ENCODE measurements at regions of chr17 and their contacts with region 1.

Region 1: DNA sequence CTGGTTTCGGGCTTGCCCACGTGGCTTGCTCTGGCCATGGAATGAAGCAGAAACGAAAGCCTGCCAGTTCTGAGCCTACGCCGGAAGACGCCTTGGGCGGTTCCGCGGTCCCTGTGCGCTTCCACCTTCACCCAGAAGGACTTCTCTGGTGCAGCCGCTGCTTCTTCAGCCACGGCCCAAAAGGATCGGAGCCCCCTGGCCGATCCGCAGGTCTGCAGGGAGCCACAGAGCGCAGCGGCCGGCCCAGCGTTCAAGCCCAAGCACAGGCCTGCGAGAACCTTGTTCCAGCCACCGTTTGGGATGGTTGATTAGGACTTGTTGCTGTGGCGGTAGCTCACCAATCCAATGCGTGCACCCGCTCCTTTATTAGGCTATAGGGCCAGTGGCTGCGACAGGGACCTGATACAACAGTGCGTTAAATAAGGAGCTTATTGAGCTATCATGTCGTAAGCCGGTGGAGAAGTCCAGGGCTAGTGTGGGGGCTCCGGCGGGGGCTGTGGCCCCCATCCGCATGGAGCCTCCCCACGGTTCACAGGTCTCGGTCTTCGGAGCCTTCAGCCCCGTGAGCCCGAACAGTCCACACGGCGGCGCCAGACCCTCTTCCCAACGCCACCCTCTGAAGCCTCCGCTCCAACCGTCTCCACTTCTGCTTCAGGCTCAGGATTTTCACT is 10.1 kb upstream of the MPP2 start:
- DNase-seq: peak in 8 of 9 experiments; percentile 24 to 74 (median 52)
- ATAC-seq: peak; percentile 79
- H3K4me3 ChIP-seq: peak overlapping the region; percentile 34 to 47
- H3K4me3 Mint-ChIP-seq: peak overlapping the region; percentile 82
- H3K27ac ChIP-seq: no peak overlapping the region
- H3K27ac Mint-ChIP-seq: no peak overlapping the region
- H3K4me1 ChIP-seq: peaks cover 10% of the 10 kb centered on the region
- H3K4me1 Mint-ChIP-seq: peaks cover 10% of the 10 kb centered on the region
- H3K27me3 ChIP-seq: no peaks in the 10 kb centered on the region
- H3K27me3 Mint-ChIP-seq: no peaks in the 10 kb centered on the region
- CTCF ChIP-seq: peak; percentile 33

Region 2: GRCh38 chr17:43946069-43946696 is 28.7 kb after region 1 on chr17:
- CTCF ChIA-PET with region 1: interaction called, 45 read pairs
- POLR2A ChIA-PET with region 1: no interaction called
- intact Hi-C with region 1: loop called in 1 of 2 experiments (anchors 2 kb)
- DNase-seq: no peak
- ATAC-seq: no peak
- H3K4me3 ChIP-seq: no peak overlapping the region
- H3K4me3 Mint-ChIP-seq: no peak overlapping the region
- H3K27ac ChIP-seq: no peak overlapping the region
- H3K27ac Mint-ChIP-seq: no peak overlapping the region
- H3K4me1 ChIP-seq: no peaks in the 10 kb centered on the region
- H3K4me1 Mint-ChIP-seq: no peaks in the 10 kb centered on the region
- H3K27me3 ChIP-seq: peaks cover 0 to under 1% of the 10 kb centered on the region in 2 experiments
- H3K27me3 Mint-ChIP-seq: peaks cover 17% of the 10 kb centered on the region
- CTCF ChIP-seq: no peak

Region 3: DNA sequence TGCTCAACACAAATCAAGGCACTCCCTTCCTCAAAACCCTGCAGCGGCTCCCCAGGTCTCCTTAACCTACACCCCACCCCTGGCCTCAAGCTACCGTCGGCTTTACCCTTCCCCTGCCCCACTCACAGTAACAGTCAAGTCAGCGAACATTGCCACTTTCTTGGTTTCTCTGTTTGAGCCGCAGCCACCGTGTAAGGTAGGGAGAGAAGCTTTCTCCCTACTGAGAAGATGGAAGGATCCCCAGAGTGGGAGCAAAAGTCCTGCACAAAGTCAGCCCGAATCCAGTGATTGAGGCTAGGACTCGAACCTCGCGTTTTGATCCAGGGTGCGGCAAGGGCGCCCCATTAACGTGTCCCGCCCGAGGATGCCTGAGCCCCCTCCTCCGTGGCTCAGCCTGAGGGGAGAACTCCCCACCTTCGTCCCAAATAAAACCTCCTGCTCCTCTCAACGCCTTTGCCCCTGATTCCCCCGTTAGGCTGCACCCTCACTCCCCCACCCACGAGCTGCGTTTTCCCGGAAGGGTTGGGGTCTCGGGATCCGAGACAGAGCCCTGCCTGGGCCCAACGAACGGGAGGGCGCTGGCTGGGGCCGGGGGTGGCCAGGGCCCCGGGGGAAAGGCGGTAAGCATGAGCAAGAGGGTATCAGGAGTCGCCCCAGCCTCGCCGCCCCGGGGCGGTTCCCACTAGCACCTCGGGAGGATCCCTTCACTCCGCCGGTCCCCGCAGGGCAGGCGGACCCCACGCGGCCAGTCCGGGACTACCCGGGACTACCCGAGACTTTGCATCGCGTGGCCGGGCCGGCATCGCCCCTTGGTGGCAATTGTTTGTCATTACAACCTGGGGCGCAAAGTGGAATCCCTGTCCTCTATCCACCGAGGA is 77.0 kb after region 1 on chr17:
- CTCF ChIA-PET with region 1: interaction called, 5 read pairs
- POLR2A ChIA-PET with region 1: no interaction called
- intact Hi-C with region 1: loop called in 1 of 2 experiments (anchors 1 kb)
- DNase-seq: peak; percentile 31 to 75 (median 65)
- ATAC-seq: peak; percentile 98
- H3K4me3 ChIP-seq: peak overlapping the region in 1 of 2 experiments; percentile 32
- H3K4me3 Mint-ChIP-seq: no peak overlapping the region
- H3K27ac ChIP-seq: no peak overlapping the region
- H3K27ac Mint-ChIP-seq: no peak overlapping the region
- H3K4me1 ChIP-seq: peaks cover 5% of the 10 kb centered on the region
- H3K4me1 Mint-ChIP-seq: peaks cover 3% of the 10 kb centered on the region
- H3K27me3 ChIP-seq: peaks cover 7 to 9% of the 10 kb centered on the region in 2 experiments
- H3K27me3 Mint-ChIP-seq: peaks cover 19% of the 10 kb centered on the region
- CTCF ChIP-seq: peak; percentile 93

Region 4: GRCh38 chr17:44049294-44050060 is 132.0 kb after region 1 on chr17:
- CTCF ChIA-PET with region 1: no interaction called
- POLR2A ChIA-PET with region 1: no interaction called
- intact Hi-C with region 1: no loop called
- DNase-seq: no peak
- ATAC-seq: no peak
- H3K4me3 ChIP-seq: no peak overlapping the region
- H3K4me3 Mint-ChIP-seq: no peak overlapping the region
- H3K27ac ChIP-seq: no peak overlapping the region
- H3K27ac Mint-ChIP-seq: no peak overlapping the region
- H3K4me1 ChIP-seq: no peaks in the 10 kb centered on the region
- H3K4me1 Mint-ChIP-seq: peaks cover 21% of the 10 kb centered on the region
- H3K27me3 ChIP-seq: no peaks in the 10 kb centered on the region
- H3K27me3 Mint-ChIP-seq: no peaks in the 10 kb centered on the region
- CTCF ChIP-seq: no peak

Region 5: GRCh38 chr17:44095642-44096496 is 178.4 kb after region 1 on chr17:
- CTCF ChIA-PET with region 1: no interaction called
- POLR2A ChIA-PET with region 1: no interaction called
- intact Hi-C with region 1: no loop called
- DNase-seq: no peak
- ATAC-seq: no peak
- H3K4me3 ChIP-seq: no peak overlapping the region
- H3K4me3 Mint-ChIP-seq: no peak overlapping the region
- H3K27ac ChIP-seq: no peak overlapping the region
- H3K27ac Mint-ChIP-seq: no peak overlapping the region
- H3K4me1 ChIP-seq: peaks cover 5% of the 10 kb centered on the region
- H3K4me1 Mint-ChIP-seq: peaks cover 12% of the 10 kb centered on the region
- H3K27me3 ChIP-seq: no peaks in the 10 kb centered on the region
- H3K27me3 Mint-ChIP-seq: no peaks in the 10 kb centered on the region
- CTCF ChIP-seq: no peak